ENCODE measurements at regions of chr16 and their contacts with region 1.

Region 1: DNA sequence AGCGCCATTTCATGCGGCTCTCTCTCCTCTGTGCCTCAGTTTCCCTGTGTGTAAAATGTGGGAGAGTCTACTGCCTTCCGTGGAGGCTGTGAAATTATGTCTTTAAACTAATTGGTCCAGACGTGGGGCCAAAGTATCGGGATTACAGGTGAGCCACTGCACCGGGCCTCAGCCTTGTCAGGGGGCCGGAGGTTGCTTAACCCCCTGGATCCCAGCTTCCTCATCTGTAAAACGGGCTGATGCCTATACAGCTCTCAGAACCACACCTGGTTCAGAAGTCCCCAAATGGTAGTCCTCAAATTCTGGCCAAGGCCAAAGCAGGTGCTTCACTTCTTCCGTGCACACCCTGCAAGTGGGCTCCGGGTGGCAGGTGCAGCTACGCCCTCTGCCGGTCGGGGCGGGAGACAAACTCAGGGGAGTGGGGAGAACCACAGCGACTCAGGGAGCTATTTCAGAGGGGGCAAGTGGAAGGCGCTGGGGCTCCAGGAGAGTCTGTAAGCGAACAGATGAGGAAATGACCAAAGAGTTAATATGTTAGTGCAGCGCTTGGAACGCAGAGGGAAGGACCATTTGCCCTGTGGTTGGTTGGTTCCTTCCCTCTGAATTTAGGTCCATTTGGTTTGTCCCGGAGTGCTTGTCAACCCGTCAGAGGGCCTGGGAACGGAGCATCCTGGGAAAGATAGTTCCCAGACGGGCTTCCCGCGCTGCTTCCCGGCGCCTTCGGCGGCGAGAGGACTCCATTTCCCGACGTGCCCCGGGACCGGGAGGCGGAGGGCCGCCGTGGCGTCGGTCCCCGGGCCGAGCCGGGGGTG is at the start of gene MGRN1:
- DNase-seq: peak; percentile 94
- H3K4me3 Mint-ChIP-seq: peak within 1 kb of the TSS; percentile 99
- H3K27ac Mint-ChIP-seq: peak within 1 kb of the TSS; percentile 92
- H3K4me1 Mint-ChIP-seq: peaks cover 40% of the 10 kb centered on the region
- H3K27me3 Mint-ChIP-seq: no peaks in the 10 kb centered on the region
- total RNA-seq, gene MGRN1: 71.8 to 73.3 TPM

Region 2: DNA sequence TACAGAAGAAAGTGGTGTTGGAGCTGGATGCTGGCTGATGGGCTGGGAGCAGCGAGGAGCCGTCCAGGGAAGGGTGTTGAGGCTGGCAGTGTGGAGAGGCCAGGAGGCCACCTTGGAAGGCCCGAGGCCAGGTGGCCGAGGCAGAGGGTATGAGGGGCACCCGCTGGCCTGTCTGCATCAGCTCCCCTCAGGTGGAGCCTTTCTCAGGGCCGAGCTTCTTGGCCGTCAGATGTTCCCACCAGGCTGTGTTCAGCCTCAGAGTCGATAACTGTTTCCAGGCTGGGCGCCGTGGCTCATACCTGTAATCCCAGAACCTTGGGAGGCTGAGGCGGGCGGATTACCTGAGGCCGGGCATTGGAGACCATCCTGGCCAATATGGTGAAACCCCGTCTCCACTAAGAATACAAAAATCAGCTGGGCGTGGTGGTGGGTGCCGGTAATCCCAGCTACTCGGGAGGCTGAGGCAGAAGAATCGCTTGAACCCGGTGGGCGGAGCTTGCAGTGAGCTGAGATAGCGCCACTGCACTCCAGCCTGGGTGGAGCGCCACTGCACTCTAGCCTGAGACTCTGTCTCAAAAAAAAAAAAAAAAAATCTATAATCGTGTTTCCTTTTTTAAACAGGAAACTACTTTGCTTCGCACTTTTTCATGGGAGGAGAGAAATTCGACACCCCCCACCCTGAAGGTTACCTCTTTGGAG is 25.7 kb after region 1 on chr16:
- CTCF ChIA-PET with region 1: interaction called, 10 read pairs
- POLR2A ChIA-PET with region 1: interaction called, 6 read pairs
- DNase-seq: peak; percentile 35
- H3K4me3 Mint-ChIP-seq: no peak overlapping the region
- H3K27ac Mint-ChIP-seq: peak overlapping the region; percentile 31
- H3K4me1 Mint-ChIP-seq: peaks cover 22% of the 10 kb centered on the region
- H3K27me3 Mint-ChIP-seq: no peaks in the 10 kb centered on the region

Region 3: DNA sequence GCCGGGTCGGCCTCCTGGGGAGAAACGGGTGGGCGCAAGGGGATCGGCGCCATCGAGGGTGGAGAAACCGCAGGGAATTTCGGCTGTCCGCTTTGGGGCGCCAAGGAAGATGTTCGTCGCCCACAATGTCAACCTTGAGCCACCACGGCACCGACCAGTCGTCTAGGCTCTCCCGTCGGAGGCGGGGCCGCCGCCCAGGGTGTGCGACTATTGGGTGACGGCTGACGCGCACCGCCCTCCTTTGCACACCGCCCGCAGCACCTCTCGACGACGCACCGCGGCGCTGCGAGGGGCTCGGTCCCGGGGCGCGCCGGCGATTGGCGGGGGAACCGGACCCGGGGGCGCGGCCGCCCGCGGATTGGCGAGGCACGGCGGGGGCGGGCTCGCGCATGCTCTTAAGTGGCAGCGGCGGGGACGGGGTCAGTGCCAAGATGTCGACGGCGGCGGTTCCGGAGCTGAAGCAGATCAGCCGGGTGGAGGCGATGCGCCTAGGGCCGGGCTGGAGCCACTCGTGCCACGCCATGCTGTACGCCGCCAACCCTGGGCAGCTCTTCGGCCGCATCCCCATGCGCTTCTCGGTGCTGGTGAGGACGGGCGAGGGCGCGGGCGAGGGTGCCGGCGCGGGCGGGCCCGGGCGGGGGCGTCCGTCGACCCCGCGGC is 69.2 kb after region 1 on chr16 and contains the start of gene NUDT16L1:
- CTCF ChIA-PET with region 1: interaction called, 7 read pairs
- POLR2A ChIA-PET with region 1: interaction called, 13 read pairs
- DNase-seq: peak; percentile 98
- H3K4me3 Mint-ChIP-seq: peak within 1 kb of the TSS; percentile 79
- H3K27ac Mint-ChIP-seq: peak within 1 kb of the TSS; percentile 78
- H3K4me1 Mint-ChIP-seq: peaks cover 18% of the 10 kb centered on the region
- H3K27me3 Mint-ChIP-seq: no peaks in the 10 kb centered on the region
- total RNA-seq, gene NUDT16L1: 24.2 to 25.5 TPM

Region 4: DNA sequence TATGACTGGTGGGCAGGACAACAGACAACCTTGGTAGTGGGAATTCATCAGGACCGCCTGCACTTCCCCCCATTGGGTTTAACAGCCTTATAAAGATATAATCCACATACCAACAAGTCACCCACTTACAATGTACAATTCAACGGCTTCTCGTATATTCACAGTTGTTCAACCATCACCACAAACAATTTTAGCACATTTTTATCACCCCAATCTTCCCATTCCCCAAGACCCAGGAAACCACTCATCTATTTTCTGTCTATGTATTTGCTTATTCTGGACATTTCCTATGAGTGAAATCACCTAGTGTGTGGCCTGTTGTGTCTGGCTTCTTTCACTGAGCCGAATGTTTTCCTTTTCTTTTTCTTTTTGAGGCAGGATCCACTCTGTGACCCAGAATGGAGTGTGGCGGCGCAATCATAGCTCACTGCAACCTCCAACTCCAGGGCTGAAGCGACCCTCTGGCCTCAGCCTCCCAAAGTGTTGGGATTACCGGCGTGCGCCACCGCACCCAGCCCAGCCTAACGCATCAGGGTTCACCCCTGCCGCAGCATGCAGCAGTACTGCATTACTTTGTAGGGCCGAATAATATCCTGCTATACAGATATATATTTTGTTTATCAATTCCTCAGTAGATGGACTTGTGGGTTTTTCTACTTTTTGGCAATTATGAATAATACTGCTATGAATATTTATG is 99.0 kb after region 1 on chr16:
- CTCF ChIA-PET with region 1: no interaction called
- POLR2A ChIA-PET with region 1: no interaction called
- DNase-seq: no peak
- H3K4me3 Mint-ChIP-seq: no peak overlapping the region
- H3K27ac Mint-ChIP-seq: no peak overlapping the region
- H3K4me1 Mint-ChIP-seq: no peaks in the 10 kb centered on the region
- H3K27me3 Mint-ChIP-seq: no peaks in the 10 kb centered on the region

Measured in activated CD4-positive, alpha-beta memory T cell treated with anti-CD3 and anti-CD28 coated beads, Interleukin-2, amount 10 ng/mL, durations not matched to agents 7 days and 5 days (primary cell).